Activated T-helper 1 cell treated with anti-CD3 and anti-CD28 coated beads, Interleukin-12 subunit alpha, Interleukin-12 subunit beta, Interleukin-2, Interleukin-4 antibody, amounts not matched to agents 30 ng/mL and 10 ng/mL and 1 ng/mL, durations not matched to agents 14 hours and 24 hours and 36 hours (primary cell): ENCODE measurements at regions of chr5 and their contacts with region 1.

Region 1: DNA sequence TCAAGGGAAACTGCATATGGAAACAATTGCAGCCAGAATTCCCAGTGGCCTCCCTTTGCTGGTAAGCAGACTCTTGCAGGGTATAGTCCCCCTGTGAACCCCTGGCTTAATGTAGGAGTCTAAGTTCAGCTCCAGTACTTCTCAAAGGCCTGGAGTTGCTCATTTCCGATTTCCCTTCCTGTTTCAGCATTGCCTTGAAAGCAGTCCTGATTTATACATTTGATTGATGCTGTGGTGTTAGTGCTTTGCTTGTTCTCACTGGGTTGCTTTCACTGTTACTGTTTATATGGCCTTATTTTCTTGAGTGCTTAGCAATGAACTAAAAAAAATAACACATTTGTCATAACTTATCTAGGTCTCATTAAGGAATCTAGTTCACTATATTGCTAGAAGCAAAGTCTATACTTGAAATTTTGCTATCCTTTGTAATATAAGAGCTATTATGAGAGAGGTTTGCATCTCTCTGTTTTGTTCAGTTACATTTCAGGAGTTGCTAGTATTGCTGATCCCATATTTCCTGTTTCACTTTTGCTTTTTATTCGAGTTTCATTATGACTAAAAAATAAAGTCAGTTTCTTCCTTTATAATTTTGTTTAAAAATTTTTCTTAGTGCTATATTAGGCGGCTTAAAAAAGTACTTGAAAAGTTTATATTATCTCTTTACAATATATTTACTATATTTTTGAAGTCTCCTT is 122.4 kb upstream of the NMUR2 start:
- DNase-seq: no peak
- H3K4me3 Mint-ChIP-seq: peak overlapping the region; percentile 23
- H3K27ac Mint-ChIP-seq: peak overlapping the region; percentile 9
- H3K4me1 Mint-ChIP-seq: peaks cover 13% of the 10 kb centered on the region
- H3K27me3 Mint-ChIP-seq: peaks cover 13% of the 10 kb centered on the region

Region 2: DNA sequence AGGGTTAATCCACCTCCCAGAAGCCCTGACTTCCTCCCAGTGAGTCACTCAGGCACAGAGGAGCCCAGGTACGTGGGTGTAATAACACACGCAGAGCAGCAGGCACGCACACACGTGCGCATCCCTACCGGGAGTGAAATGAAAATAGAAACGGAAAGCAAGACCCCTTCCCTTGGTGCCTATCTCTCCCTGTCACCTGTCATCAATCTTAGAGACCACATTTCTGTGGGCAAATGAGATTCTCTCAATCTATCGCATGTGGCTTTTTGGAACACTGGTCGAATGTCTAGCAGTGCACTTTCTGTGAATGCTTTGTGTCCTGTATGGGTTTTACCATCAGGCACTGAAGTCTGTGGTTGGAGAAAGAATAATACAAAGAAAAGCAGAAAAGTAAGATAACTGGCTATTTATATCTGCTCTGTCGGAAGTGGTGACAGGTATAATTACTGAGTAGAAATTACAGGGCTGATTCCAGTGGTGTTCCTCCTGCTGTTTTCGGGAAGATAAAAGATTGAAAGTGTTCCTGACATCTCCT is 825.2 kb after region 1 on chr5:
- intact Hi-C with region 1: loop called (anchors 10 kb)
- DNase-seq: no peak
- H3K4me3 Mint-ChIP-seq: peak overlapping the region; percentile 67
- H3K27ac Mint-ChIP-seq: no peak overlapping the region
- H3K4me1 Mint-ChIP-seq: peaks cover 13% of the 10 kb centered on the region
- H3K27me3 Mint-ChIP-seq: peaks cover 12% of the 10 kb centered on the region